ENCODE measurements at regions of chr17 and their contacts with region 1.

Region 1: DNA sequence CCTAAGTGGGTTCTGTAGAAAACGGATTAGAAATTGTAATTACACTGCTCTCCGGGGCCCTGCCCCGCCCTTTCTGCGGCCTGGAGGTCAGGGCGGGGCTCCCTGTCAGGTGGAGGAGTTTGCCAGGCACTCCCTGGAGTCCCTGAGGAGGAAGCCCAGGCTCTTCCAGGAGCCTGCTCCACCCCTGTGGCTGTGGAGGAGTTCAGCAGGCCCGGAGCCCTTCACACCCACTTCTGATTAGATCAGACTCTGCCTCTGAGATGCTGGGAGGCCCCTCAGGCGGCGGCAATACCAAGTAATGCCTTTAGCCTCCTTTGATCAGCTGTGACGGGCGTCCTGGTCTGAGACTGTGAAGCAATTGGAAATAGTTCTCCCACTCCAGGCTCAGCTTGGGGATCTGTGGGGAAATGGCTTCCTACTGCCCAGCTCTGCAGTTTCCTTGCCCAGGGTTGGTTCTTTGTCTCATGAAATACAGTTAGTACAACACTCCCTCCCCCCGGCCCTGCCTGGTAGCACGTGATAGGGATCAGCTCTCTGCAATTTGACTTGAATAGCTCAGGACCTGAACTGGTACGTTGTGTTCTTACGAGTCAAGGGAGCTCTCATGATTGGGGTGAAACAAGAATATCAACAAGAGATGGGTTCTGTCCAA is 22.3 kb downstream of the BAIAP2 start:
- DNase-seq: peak; percentile 83
- H3K4me3 ChIP-seq: no peak overlapping the region
- H3K27ac ChIP-seq: peak overlapping the region; percentile 81
- H3K4me1 ChIP-seq: peaks cover 34% of the 10 kb centered on the region
- H3K27me3 ChIP-seq: no peaks in the 10 kb centered on the region
- CTCF ChIP-seq: peak in 1 of 2 donors; percentile 5

Region 2: GRCh38 chr17:81040791-81041337 is 16.3 kb before region 1 on chr17:
- CTCF ChIA-PET with region 1: no interaction called
- dilution Hi-C with region 1: no loop called
- in situ Hi-C with region 1: no loop called
- intact Hi-C with region 1: loop called (anchors 2 kb)
- DNase-seq: no peak
- H3K4me3 ChIP-seq: peak overlapping the region in 1 of 3 experiments; percentile 10
- H3K27ac ChIP-seq: peak overlapping the region; percentile 52
- H3K4me1 ChIP-seq: peaks cover 98% of the 10 kb centered on the region
- H3K27me3 ChIP-seq: no peaks in the 10 kb centered on the region
- CTCF ChIP-seq: peak; percentile 34 to 52

Measured in mammary epithelial cell (primary cell).